Vagina (tissue), 2 donors: ENCODE measurements at regions of chr1 and their contacts with region 1.

Region 1: DNA sequence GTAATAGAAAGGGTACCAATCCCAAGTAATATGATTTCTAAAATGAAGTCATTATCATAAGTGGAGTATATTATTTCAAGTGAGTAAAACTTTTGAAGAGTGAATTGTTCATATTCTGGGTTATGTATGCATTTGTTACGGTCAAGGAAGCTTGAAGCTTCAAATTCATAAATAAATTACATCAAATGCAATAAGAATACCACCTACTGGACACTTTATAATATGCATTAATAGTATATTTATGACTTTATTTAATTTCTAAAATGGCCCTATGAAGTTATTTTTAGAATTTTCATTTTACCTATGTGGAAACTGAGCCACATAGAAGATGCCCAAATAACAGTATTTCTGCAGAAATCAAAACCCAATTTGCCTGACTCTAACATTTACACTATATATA is 260.6 kb downstream of the SMYD3 start:
- DNase-seq: no peak
- H3K4me3 ChIP-seq: no peak overlapping the region
- H3K27ac ChIP-seq: no peak overlapping the region
- H3K4me1 ChIP-seq: no peaks in the 10 kb centered on the region
- H3K27me3 ChIP-seq: no peaks in the 10 kb centered on the region
- CTCF ChIP-seq: no peak
- POLR2A ChIP-seq: no peak

Region 2: GRCh38 chr1:246117066-246117791 is 129.2 kb before region 1 on chr1:
- intact Hi-C with region 1: no loop called
- DNase-seq: no peak
- H3K4me3 ChIP-seq: no peak overlapping the region
- H3K27ac ChIP-seq: no peak overlapping the region
- H3K4me1 ChIP-seq: no peaks in the 10 kb centered on the region
- H3K27me3 ChIP-seq: no peaks in the 10 kb centered on the region
- CTCF ChIP-seq: no peak
- POLR2A ChIP-seq: no peak

Region 3: GRCh38 chr1:246181241-246181640 is 65.2 kb before region 1 on chr1:
- intact Hi-C with region 1: no loop called
- DNase-seq: no peak
- H3K4me3 ChIP-seq: no peak overlapping the region
- H3K27ac ChIP-seq: no peak overlapping the region
- H3K4me1 ChIP-seq: no peaks in the 10 kb centered on the region
- H3K27me3 ChIP-seq: no peaks in the 10 kb centered on the region
- CTCF ChIP-seq: no peak
- POLR2A ChIP-seq: no peak

Region 4: GRCh38 chr1:246210796-246211195 is 35.6 kb before region 1 on chr1:
- intact Hi-C with region 1: no loop called
- DNase-seq: no peak
- H3K4me3 ChIP-seq: no peak overlapping the region
- H3K27ac ChIP-seq: no peak overlapping the region
- H3K4me1 ChIP-seq: no peaks in the 10 kb centered on the region
- H3K27me3 ChIP-seq: no peaks in the 10 kb centered on the region
- CTCF ChIP-seq: no peak
- POLR2A ChIP-seq: no peak

Region 5: GRCh38 chr1:246261639-246262038 is 15.2 kb after region 1 on chr1:
- intact Hi-C with region 1: no loop called
- DNase-seq: no peak
- H3K4me3 ChIP-seq: no peak overlapping the region
- H3K27ac ChIP-seq: no peak overlapping the region
- H3K4me1 ChIP-seq: no peaks in the 10 kb centered on the region
- H3K27me3 ChIP-seq: no peaks in the 10 kb centered on the region
- CTCF ChIP-seq: no peak
- POLR2A ChIP-seq: no peak

Region 6: GRCh38 chr1:247331172-247331991 is 1085.0 kb after region 1 on chr1 and contains the start of gene ZNF496:
- intact Hi-C with region 1: loop called (anchors 5 kb)
- DNase-seq: no peak
- H3K4me3 ChIP-seq: peak within 1 kb of the TSS; percentile 73 to 91
- H3K27ac ChIP-seq: peak within 1 kb of the TSS; percentile 95
- H3K4me1 ChIP-seq: peaks cover 62% of the 10 kb centered on the region
- H3K27me3 ChIP-seq: no peaks in the 10 kb centered on the region
- CTCF ChIP-seq: no peak
- POLR2A ChIP-seq: peak in 1 of 2 donors; percentile 41
- total RNA-seq, gene ZNF496: 39.0 TPM